CD4-positive, alpha-beta T cell (primary cell): ENCODE measurements at regions of chr11 and their contacts with region 1.

Region 1: DNA sequence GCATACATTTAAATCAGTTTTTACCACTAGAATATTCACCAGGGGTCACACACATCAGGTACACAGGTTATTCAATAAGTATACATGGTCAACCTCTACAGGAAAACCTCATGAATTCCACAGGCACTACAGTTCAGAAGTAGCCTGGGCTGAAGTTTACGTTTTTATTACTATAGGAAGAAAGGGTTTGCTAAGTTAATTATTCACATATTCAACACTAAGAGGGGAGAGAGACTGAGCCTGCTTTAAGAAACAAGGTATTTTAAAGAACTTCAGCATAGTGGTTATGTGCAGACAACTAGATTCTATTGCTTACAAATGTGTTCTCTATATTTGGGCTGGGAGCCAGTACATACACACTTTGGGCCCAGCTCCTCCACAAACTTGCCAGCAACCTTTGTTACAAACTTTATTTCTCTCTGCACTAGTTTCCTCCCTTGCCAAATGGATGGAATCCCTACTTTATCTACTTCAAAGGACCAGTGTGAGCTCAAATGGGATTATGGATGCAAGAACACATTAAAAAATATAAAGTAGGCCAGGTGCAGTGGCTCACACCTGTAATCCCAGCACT is 31.9 kb downstream of the IL18BP start:
- DNase-seq: no peak
- ATAC-seq: no peak
- H3K4me3 ChIP-seq: no peak overlapping the region
- H3K4me3 Mint-ChIP-seq: no peak overlapping the region
- H3K27ac ChIP-seq: peak overlapping the region in 1 of 2 donors; percentile 17
- H3K27ac Mint-ChIP-seq: peak overlapping the region; percentile 66
- H3K4me1 ChIP-seq: peaks cover 54% of the 10 kb centered on the region
- H3K4me1 Mint-ChIP-seq: peaks cover 68% of the 10 kb centered on the region
- H3K27me3 ChIP-seq: no peaks in the 10 kb centered on the region
- H3K27me3 Mint-ChIP-seq: no peaks in the 10 kb centered on the region
- CTCF ChIP-seq: no peak

Region 2: GRCh38 chr11:72085621-72086351 is 55.2 kb after region 1 on chr11:
- CTCF ChIA-PET with region 1: interaction called, 74 read pairs
- POLR2A ChIA-PET with region 1: interaction called, 21 read pairs
- intact Hi-C with region 1: no loop called
- DNase-seq: no peak
- ATAC-seq: no peak
- H3K4me3 ChIP-seq: no peak overlapping the region
- H3K4me3 Mint-ChIP-seq: no peak overlapping the region
- H3K27ac ChIP-seq: no peak overlapping the region
- H3K27ac Mint-ChIP-seq: peak overlapping the region; percentile 50
- H3K4me1 ChIP-seq: peaks cover 15% of the 10 kb centered on the region
- H3K4me1 Mint-ChIP-seq: peaks cover 17% of the 10 kb centered on the region
- H3K27me3 ChIP-seq: no peaks in the 10 kb centered on the region
- H3K27me3 Mint-ChIP-seq: no peaks in the 10 kb centered on the region
- CTCF ChIP-seq: no peak

Region 3: GRCh38 chr11:72102946-72103753 is 72.6 kb after region 1 on chr11 and contains the start of gene LAMTOR1:
- CTCF ChIA-PET with region 1: interaction called, 33 read pairs
- POLR2A ChIA-PET with region 1: no interaction called
- intact Hi-C with region 1: no loop called
- DNase-seq: peak; percentile 94 to 98 (median 97)
- ATAC-seq: peak; percentile 95
- H3K4me3 ChIP-seq: peak within 1 kb of the TSS; percentile 93
- H3K4me3 Mint-ChIP-seq: peak within 1 kb of the TSS; percentile 91
- H3K27ac ChIP-seq: peak within 1 kb of the TSS; percentile 88 to 93
- H3K27ac Mint-ChIP-seq: peak within 1 kb of the TSS; percentile 98
- H3K4me1 ChIP-seq: peaks cover 34% of the 10 kb centered on the region
- H3K4me1 Mint-ChIP-seq: peaks cover 49% of the 10 kb centered on the region
- H3K27me3 ChIP-seq: no peaks in the 10 kb centered on the region
- H3K27me3 Mint-ChIP-seq: no peaks in the 10 kb centered on the region
- CTCF ChIP-seq: peak; percentile 36
- total RNA-seq, gene LAMTOR1: 29.5 to 30.4 TPM

Region 4: DNA sequence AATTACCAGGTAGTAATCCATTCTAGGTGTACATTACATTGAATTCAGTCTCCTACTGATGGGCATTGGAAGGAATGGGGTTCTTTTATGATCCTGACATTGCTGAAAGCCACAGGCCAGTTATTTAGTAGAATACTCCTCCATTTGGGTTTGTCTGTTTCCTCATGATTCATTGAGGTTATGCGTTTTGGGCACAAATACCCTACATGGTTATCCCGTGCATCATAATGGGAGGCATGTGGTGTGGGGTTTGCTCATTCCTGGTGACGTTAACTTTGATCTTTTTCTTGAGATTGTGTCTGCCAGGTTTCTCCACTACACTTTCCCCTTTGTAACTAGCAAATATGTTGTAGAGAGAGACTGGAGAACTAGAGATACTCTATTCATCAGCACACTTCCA is 110.5 kb after region 1 on chr11:
- CTCF ChIA-PET with region 1: interaction called, 50 read pairs
- POLR2A ChIA-PET with region 1: interaction called, 4 read pairs
- intact Hi-C with region 1: loop called (anchors 1 kb)
- DNase-seq: peak in 1 of 14 experiments; percentile 4
- ATAC-seq: peak; percentile 25
- H3K4me3 ChIP-seq: no peak overlapping the region
- H3K4me3 Mint-ChIP-seq: no peak overlapping the region
- H3K27ac ChIP-seq: no peak overlapping the region
- H3K27ac Mint-ChIP-seq: no peak overlapping the region
- H3K4me1 ChIP-seq: no peaks in the 10 kb centered on the region
- H3K4me1 Mint-ChIP-seq: no peaks in the 10 kb centered on the region
- H3K27me3 ChIP-seq: no peaks in the 10 kb centered on the region
- H3K27me3 Mint-ChIP-seq: peaks cover 11% of the 10 kb centered on the region
- CTCF ChIP-seq: no peak

Region 5: DNA sequence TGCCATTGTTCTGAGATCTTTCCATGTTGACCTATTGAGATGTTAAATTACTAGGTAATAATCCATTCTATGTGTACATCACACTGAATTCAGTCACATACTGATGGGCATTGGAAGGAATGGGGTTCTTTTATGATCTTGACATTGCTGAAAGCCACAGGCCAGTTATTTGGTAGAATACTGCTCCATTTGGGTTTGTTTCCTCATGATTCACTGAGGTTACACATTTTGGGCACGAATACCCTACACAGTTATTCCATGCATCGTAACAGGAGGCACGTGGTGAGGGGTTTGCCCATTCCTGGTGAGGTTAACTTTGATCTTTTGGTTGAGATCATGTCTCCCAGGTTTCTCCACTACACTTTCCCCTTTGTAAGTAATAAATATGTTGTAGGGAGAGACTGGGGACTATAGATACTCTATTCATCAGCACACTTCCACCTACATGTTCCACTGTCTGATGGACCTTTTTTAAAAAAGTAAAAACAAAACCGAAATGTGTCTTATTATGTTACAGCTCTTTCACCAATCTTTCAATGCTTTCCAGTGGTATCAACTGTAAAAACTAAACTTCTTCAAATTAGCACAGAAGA is 149.3 kb after region 1 on chr11:
- CTCF ChIA-PET with region 1: interaction called, 3 read pairs
- POLR2A ChIA-PET with region 1: no interaction called
- intact Hi-C with region 1: loop called in 1 of 2 experiments (anchors 5 kb)
- DNase-seq: no peak
- ATAC-seq: no peak
- H3K4me3 ChIP-seq: no peak overlapping the region
- H3K4me3 Mint-ChIP-seq: no peak overlapping the region
- H3K27ac ChIP-seq: no peak overlapping the region
- H3K27ac Mint-ChIP-seq: no peak overlapping the region
- H3K4me1 ChIP-seq: no peaks in the 10 kb centered on the region
- H3K4me1 Mint-ChIP-seq: no peaks in the 10 kb centered on the region
- H3K27me3 ChIP-seq: no peaks in the 10 kb centered on the region
- H3K27me3 Mint-ChIP-seq: peaks cover 11% of the 10 kb centered on the region
- CTCF ChIP-seq: no peak

Region 6: DNA sequence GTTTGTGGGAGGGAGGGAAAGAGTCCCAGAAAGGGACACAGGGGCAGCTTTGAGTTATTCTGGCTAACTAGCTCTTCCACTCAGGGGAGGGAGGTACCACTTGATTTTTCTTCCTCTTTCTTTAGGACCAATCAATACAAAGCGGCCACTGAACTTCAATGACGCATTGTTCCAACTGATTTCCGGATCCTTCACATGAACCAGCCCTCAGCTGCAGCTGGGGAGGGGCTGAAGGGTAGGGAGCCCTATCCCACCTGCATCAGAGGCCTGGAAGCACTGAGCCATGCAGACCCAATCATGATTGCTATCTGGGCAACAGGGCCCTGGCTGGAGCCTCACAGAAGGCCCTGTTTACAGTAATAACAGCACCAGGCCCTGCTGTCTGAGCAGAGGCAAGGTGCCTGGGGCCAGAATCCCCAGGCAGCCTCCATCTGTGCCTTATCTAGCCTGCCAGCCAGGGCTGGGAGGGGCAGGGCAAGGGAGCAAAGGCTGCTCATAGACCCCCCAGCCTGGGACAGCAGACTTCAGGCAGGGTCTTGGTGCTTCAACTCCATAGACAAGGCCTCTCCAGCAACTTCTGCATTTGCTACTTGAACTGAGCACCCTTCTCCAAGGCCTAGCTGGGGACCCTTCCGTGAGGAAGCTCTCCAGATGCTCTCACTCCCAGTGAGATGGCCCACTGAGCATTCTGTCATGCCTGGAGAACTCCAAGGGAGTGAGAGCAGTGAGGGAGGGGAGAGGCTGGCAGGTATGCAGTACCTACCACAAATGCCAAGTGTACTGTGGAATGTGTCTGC is 381.3 kb after region 1 on chr11:
- CTCF ChIA-PET with region 1: no interaction called
- POLR2A ChIA-PET with region 1: no interaction called
- intact Hi-C with region 1: no loop called
- DNase-seq: peak in 3 of 14 experiments; percentile 8 to 59 (median 58)
- ATAC-seq: peak; percentile 85
- H3K4me3 ChIP-seq: no peak overlapping the region
- H3K4me3 Mint-ChIP-seq: peak overlapping the region; percentile 11
- H3K27ac ChIP-seq: no peak overlapping the region
- H3K27ac Mint-ChIP-seq: peak overlapping the region; percentile 84
- H3K4me1 ChIP-seq: peaks cover 17% of the 10 kb centered on the region
- H3K4me1 Mint-ChIP-seq: peaks cover 36% of the 10 kb centered on the region
- H3K27me3 ChIP-seq: no peaks in the 10 kb centered on the region
- H3K27me3 Mint-ChIP-seq: no peaks in the 10 kb centered on the region
- CTCF ChIP-seq: no peak

Region 7: GRCh38 chr11:72712168-72712751 is 681.7 kb after region 1 on chr11:
- CTCF ChIA-PET with region 1: no interaction called
- POLR2A ChIA-PET with region 1: no interaction called
- intact Hi-C with region 1: no loop called
- DNase-seq: peak in 1 of 14 experiments; percentile 36
- ATAC-seq: no peak
- H3K4me3 ChIP-seq: no peak overlapping the region
- H3K4me3 Mint-ChIP-seq: no peak overlapping the region
- H3K27ac ChIP-seq: no peak overlapping the region
- H3K27ac Mint-ChIP-seq: no peak overlapping the region
- H3K4me1 ChIP-seq: peaks cover 24% of the 10 kb centered on the region
- H3K4me1 Mint-ChIP-seq: peaks cover 28% of the 10 kb centered on the region
- H3K27me3 ChIP-seq: no peaks in the 10 kb centered on the region
- H3K27me3 Mint-ChIP-seq: no peaks in the 10 kb centered on the region
- CTCF ChIP-seq: no peak

Region 8: DNA sequence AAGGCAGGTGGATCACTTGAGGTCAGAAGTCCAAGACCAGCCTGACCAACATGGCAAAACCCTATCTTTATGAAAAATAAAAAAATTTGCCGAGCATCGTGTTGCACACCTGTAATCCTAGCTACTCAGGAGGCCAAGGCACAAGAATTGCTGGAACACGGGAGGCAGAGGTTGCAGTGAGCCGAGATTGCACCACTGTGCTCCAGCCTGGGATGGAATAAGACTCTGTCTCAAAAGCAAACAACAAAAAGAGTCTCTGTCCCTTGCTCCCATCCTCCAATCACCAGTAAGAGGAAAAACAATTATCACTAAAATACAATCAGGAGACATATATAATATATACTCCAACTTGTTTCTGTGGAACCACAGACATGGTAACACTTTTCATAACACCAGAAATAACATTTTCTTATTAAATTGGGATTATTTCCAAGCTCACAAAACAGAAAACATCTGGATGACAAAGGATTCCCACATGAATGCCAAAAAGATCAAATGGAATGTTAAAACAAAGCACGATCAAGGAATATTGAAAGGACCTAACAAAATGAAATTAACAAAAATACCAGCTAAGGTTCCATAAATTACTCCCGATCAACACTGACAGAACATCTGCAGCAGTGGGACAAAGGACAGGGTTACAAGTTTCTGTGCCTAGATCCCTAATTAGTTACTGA is 1096.4 kb after region 1 on chr11:
- CTCF ChIA-PET with region 1: no interaction called
- POLR2A ChIA-PET with region 1: no interaction called
- intact Hi-C with region 1: no loop called
- DNase-seq: no peak
- ATAC-seq: no peak
- H3K4me3 ChIP-seq: no peak overlapping the region
- H3K4me3 Mint-ChIP-seq: no peak overlapping the region
- H3K27ac ChIP-seq: no peak overlapping the region
- H3K27ac Mint-ChIP-seq: no peak overlapping the region
- H3K4me1 ChIP-seq: no peaks in the 10 kb centered on the region
- H3K4me1 Mint-ChIP-seq: peaks cover 9% of the 10 kb centered on the region
- H3K27me3 ChIP-seq: no peaks in the 10 kb centered on the region
- H3K27me3 Mint-ChIP-seq: no peaks in the 10 kb centered on the region
- CTCF ChIP-seq: no peak